ENCODE measurements at regions of chr7 and their contacts with region 1.

Region 1: DNA sequence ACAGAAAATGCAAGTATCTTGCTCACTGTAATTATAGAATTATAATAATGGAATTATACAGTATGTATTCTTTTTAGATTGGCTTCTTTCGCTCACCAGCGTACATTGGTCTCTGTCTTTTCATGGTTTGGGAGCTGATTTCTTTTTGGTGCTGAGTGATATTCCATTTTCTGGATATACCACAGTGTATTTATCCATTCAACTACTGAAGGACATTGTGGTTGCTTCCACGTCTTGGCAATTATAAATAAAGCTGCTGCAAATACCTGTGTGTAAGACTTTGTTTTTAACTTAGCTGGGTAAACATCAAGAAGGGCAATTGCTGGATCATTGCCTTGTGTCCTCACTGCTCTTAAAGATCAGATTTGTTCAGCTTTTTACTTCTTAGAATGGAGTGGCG is 55.3 kb downstream of the SEPTIN7 start:
- DNase-seq: no peak
- ATAC-seq: no peak
- H3K4me3 ChIP-seq: no peak overlapping the region
- H3K27ac ChIP-seq: no peak overlapping the region
- H3K4me1 ChIP-seq: peaks cover 2% of the 10 kb centered on the region
- H3K27me3 ChIP-seq: no peaks in the 10 kb centered on the region
- CTCF ChIP-seq: no peak
- POLR2A ChIP-seq: no peak
- RAD21 ChIP-seq: no peak

Region 2: GRCh38 chr7:35894721-35895120 is 38.5 kb after region 1 on chr7:
- CTCF ChIA-PET with region 1: no interaction called
- POLR2A ChIA-PET with region 1: no interaction called
- dilution Hi-C with region 1: no loop called
- in situ Hi-C with region 1: no loop called
- intact Hi-C with region 1: loop called (anchors 5 kb)
- DNase-seq: no peak
- ATAC-seq: no peak
- H3K4me3 ChIP-seq: no peak overlapping the region
- H3K27ac ChIP-seq: no peak overlapping the region
- H3K4me1 ChIP-seq: no peaks in the 10 kb centered on the region
- H3K27me3 ChIP-seq: no peaks in the 10 kb centered on the region
- CTCF ChIP-seq: no peak
- POLR2A ChIP-seq: no peak
- RAD21 ChIP-seq: no peak

Region 3: GRCh38 chr7:36303202-36304098 is 447.3 kb after region 1 on chr7:
- CTCF ChIA-PET with region 1: no interaction called
- POLR2A ChIA-PET with region 1: no interaction called
- dilution Hi-C with region 1: no loop called
- in situ Hi-C with region 1: no loop called
- intact Hi-C with region 1: no loop called
- DNase-seq: peak; percentile 95
- ATAC-seq: peak; percentile 86
- H3K4me3 ChIP-seq: no peak overlapping the region
- H3K27ac ChIP-seq: peak overlapping the region; percentile 4; the same call in 1 of the 2 replicates
- H3K4me1 ChIP-seq: peaks cover 23% of the 10 kb centered on the region
- H3K27me3 ChIP-seq: no peaks in the 10 kb centered on the region
- CTCF ChIP-seq: no peak
- POLR2A ChIP-seq: no peak
- RAD21 ChIP-seq: no peak

Measured in IMR-90 (cell line).